Breast epithelium (tissue), 4 donors: ENCODE measurements at regions of chr13 and their contacts with region 1.

Region 1: GRCh38 chr13:110412132-110412914 is 105.2 kb downstream of the COL4A2 start:
- DNase-seq: peak; percentile 86 to 91
- H3K4me3 ChIP-seq: no peak overlapping the region
- H3K27ac ChIP-seq: peak overlapping the region; percentile 86 to 89
- H3K4me1 ChIP-seq: peaks cover 0 to 7% of the 10 kb centered on the region in 2 donors
- H3K27me3 ChIP-seq: no peaks in the 10 kb centered on the region
- CTCF ChIP-seq: peak; percentile 96 to 97 (median 96)
- POLR2A ChIP-seq: no peak

Region 2: DNA sequence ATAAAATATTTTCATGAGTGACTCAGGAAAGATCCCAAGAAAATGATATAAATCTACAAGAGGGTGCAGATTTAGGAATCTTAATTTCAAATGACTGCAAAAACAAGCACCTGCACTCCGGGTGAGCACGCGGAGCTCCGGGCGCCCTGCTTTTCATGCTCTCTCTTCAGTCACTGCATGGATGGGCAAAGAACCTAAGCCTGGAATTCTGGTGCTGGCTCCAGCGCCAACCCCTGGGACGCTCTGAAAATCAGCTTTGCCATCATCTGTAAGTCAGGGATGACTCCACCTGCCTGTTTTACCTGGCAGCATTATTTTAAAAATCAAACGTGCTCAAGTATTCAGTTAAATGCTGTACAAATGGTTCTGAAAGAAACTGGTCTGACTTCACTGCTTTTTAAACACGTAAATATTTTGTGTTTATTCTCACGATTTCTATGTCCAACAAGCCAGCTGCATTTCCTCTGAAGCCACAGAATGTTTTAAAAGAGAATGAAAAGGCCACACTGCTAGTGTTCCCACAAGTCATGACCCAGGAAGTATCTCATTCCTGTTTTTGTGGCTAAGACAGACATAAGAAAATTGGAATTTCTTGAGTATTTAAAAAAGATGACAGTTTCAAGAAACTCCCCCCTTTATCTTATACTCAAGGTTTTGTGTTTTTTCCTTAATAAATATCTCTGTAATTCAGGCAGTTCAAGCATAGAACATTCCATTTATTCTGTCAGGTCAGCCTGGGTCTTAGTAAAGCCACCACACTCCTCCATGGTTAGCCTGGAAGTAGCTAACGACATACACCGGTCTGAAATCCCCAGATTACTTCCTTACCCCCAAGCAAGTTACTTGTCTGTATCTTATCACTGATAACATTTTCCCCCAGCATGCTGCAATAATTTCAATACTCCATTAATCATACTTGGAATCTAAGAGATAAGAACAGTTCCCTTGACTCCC is 186.4 kb before region 1 on chr13:
- intact Hi-C with region 1: loop called (anchors 10 kb)
- DNase-seq: no peak
- H3K4me3 ChIP-seq: no peak overlapping the region
- H3K27ac ChIP-seq: no peak overlapping the region
- H3K4me1 ChIP-seq: no peaks in the 10 kb centered on the region
- H3K27me3 ChIP-seq: no peaks in the 10 kb centered on the region
- CTCF ChIP-seq: no peak
- POLR2A ChIP-seq: no peak

Region 3: GRCh38 chr13:112056284-112056727 is 1644.0 kb after region 1 on chr13:
- intact Hi-C with region 1: no loop called
- DNase-seq: no peak
- H3K4me3 ChIP-seq: peak overlapping the region in 1 of 3 donors; percentile 19
- H3K27ac ChIP-seq: no peak overlapping the region
- H3K4me1 ChIP-seq: no peaks in the 10 kb centered on the region
- H3K27me3 ChIP-seq: peaks cover 5 to 100% of the 10 kb centered on the region in 2 donors
- CTCF ChIP-seq: no peak
- POLR2A ChIP-seq: no peak